ENCODE measurements at regions of chr16 and their contacts with region 1.

Region 1: GRCh38 chr16:30458561-30459394 is 13.1 kb upstream of the SEPHS2 start:
- DNase-seq: peak; percentile 27 to 84 (median 47)
- ATAC-seq: peak in 3 of 4 donors; percentile 35 to 71 (median 50)
- H3K4me3 ChIP-seq: no peak overlapping the region
- H3K27ac ChIP-seq: peak overlapping the region in 1 of 12 donors; percentile 83
- H3K4me1 ChIP-seq: peaks cover 0 to 31% (median 0%) of the 10 kb centered on the region in 12 donors
- H3K27me3 ChIP-seq: no peaks in the 10 kb centered on the region
- CTCF ChIP-seq: no peak
- POLR2A ChIP-seq: no peak

Region 2: DNA sequence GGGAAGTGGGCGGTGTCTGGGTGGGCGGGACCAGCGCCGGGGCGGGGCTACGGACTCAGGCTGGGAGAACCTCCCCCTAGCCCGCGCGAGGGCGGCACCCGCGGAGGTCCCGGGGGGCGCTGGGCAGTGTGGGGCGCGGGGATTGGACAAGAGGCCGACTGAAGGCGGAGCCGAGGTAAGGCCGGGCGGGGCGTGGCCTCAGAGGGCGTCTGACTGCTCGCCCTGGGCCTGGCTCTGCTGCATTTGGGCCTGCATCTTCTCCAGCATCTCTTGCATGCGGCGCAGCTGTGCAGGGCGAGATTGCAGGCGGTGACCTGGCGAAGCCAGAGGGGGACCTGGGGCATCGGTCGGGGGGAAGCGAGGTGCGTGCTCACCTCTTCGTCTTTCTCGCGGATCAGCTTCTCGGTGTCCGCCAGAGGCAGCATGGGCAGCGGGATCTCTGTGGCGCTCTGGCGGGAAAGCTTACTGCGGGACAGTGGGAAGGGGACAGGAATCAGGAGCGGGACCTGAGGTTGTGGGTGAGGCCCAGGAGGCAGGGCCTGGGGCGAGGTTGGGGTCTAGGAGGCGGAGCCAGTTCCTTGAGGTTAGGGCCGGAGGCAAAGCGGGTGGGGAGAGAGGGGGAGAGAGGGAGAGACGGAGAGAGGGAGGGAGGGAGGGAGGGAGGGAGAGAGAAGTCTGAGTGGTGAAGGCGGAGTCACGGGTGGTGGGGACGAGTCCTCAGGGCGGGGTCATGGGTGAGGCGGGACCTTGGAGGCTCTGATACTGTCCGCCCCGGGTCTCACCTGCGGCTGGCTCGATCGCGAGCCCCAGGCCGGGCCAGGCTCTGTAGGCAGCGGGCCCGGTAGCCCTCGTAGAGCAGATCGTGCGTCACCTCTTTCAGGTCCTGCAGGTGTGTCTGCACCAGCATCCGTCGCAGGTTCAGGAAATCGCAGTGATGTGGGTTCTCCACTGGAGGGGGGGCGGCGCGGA is 80.3 kb before region 1 on chr16:
- intact Hi-C with region 1: no loop called
- DNase-seq: peak; percentile 99 to 100 (median 99)
- ATAC-seq: peak; percentile 96 to 98 (median 98)
- H3K4me3 ChIP-seq: peak overlapping the region; percentile 63 to 82 (median 70)
- H3K27ac ChIP-seq: peak overlapping the region; percentile 97 to 100 (median 99)
- H3K4me1 ChIP-seq: peaks cover 0 to 44% (median 15%) of the 10 kb centered on the region in 12 donors
- H3K27me3 ChIP-seq: no peaks in the 10 kb centered on the region
- CTCF ChIP-seq: peak in 5 of 12 donors; percentile 6 to 39 (median 25)
- POLR2A ChIP-seq: peak in 1 of 2 donors; percentile 86

Region 3: DNA sequence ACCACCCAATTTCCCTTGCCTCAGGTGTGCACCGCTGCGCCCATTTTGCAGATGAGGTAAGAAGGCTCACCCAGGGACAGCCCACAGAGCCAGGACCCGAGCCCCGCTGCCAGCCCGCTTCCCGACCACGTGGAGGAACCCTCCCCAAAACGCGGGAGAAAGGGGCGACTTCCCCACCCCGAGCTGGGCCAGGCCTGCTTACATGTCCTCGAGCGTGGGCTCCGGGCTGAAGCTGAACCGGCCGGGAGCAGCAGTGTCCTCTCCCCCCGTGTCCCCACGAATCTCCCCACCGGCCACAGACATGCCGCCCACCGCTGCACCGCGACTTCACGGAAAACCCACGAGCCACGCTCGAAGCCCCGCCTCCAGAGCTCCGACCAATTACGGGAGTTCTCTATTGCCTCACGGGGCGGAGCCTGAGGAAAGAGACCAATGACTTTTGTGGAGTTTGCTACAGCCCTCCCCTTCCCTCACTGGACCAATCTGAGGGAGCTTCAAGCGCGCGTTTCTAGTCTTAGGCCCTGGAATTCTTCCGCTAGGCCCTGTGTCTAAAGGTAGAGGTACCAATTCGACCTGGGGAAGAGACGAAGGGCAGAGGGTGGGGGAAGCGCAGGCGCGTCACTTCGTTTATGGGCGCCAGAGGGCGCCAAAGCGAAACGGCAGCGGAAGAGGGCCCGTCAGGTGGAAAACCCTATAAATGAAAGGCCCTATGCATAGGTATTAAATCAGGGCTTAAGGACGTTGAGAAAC is 28.9 kb before region 1 on chr16 and contains the start of gene DCTPP1:
- intact Hi-C with region 1: no loop called
- DNase-seq: peak; percentile 94 to 98 (median 95)
- ATAC-seq: peak; percentile 99
- H3K4me3 ChIP-seq: peak within 1 kb of the TSS; percentile 30 to 88 (median 71)
- H3K27ac ChIP-seq: peak within 1 kb of the TSS in 11 of 12 donors; percentile 36 to 79 (median 73)
- H3K4me1 ChIP-seq: peaks cover 0 to 22% (median 13%) of the 10 kb centered on the region in 12 donors
- H3K27me3 ChIP-seq: no peaks in the 10 kb centered on the region
- CTCF ChIP-seq: peak; percentile 53 to 84 (median 72)
- POLR2A ChIP-seq: peak in 1 of 2 donors; percentile 46
- total RNA-seq, gene DCTPP1: 18.9 to 32.6 (median 28.4) TPM

Region 4: GRCh38 chr16:30491744-30492308 is 33.0 kb after region 1 on chr16:
- intact Hi-C with region 1: no loop called
- DNase-seq: peak in 2 of 5 donors; percentile 20 to 51
- ATAC-seq: peak in 1 of 4 donors; percentile 64
- H3K4me3 ChIP-seq: no peak overlapping the region
- H3K27ac ChIP-seq: peak overlapping the region in 1 of 12 donors; percentile 46
- H3K4me1 ChIP-seq: peaks cover 0 to 26% (median 0%) of the 10 kb centered on the region in 12 donors
- H3K27me3 ChIP-seq: no peaks in the 10 kb centered on the region
- CTCF ChIP-seq: no peak
- POLR2A ChIP-seq: no peak

Region 5: GRCh38 chr16:30510376-30510938 is 51.7 kb after region 1 on chr16:
- intact Hi-C with region 1: loop called in 1 of 10 experiments (anchors 5 kb)
- DNase-seq: no peak
- ATAC-seq: no peak
- H3K4me3 ChIP-seq: no peak overlapping the region
- H3K27ac ChIP-seq: no peak overlapping the region
- H3K4me1 ChIP-seq: no peaks in the 10 kb centered on the region
- H3K27me3 ChIP-seq: no peaks in the 10 kb centered on the region
- CTCF ChIP-seq: no peak
- POLR2A ChIP-seq: no peak

Region 6: GRCh38 chr16:30602616-30603277 is 144.0 kb after region 1 on chr16:
- intact Hi-C with region 1: loop called in 1 of 10 experiments (anchors 5 kb)
- DNase-seq: no peak
- ATAC-seq: peak in 3 of 4 donors; percentile 28 to 43 (median 35)
- H3K4me3 ChIP-seq: no peak overlapping the region
- H3K27ac ChIP-seq: peak overlapping the region in 2 of 12 donors; percentile 46 to 53
- H3K4me1 ChIP-seq: peaks cover 0 to 52% (median 8%) of the 10 kb centered on the region in 12 donors
- H3K27me3 ChIP-seq: no peaks in the 10 kb centered on the region
- CTCF ChIP-seq: no peak
- POLR2A ChIP-seq: no peak

Measured in heart left ventricle (tissue), 16 donors.